AG04450 (cell line): ENCODE measurements at regions of chr4 and their contacts with region 1.

Region 1: DNA sequence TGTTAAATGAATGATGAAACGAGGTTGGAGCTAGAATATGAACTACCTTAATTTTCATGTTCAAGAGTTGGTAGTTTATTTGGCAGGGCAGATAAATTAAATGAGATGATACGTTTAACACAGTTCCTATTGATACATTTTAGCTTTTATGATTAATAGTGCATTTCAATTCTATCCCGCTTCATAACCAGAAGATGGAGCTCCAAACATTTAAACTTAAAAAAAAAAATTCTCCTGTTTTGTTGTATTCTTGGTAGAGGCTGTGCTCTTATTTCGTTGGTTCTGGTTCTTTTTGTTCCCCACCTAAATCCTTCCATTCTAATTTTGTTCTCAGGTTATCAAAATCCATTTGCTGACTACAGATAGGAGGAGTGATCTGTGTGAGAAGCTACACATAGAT is 71.8 kb upstream of the PTPN13 start:
- DNase-seq: no peak
- H3K4me3 ChIP-seq: no peak overlapping the region
- H3K27ac ChIP-seq: no peak overlapping the region
- H3K27me3 ChIP-seq: peaks cover 2% of the 10 kb centered on the region
- CTCF ChIP-seq: peak; percentile 33

Region 2: GRCh38 chr4:86117705-86118302 is 404.5 kb before region 1 on chr4:
- CTCF ChIA-PET with region 1: no interaction called
- POLR2A ChIA-PET with region 1: no interaction called
- DNase-seq: peak; percentile 30
- H3K4me3 ChIP-seq: no peak overlapping the region
- H3K27ac ChIP-seq: no peak overlapping the region
- H3K27me3 ChIP-seq: peaks cover 2% of the 10 kb centered on the region
- CTCF ChIP-seq: no peak

Region 3: GRCh38 chr4:86326400-86326799 is 195.9 kb before region 1 on chr4:
- CTCF ChIA-PET with region 1: no interaction called
- POLR2A ChIA-PET with region 1: no interaction called
- DNase-seq: no peak
- H3K4me3 ChIP-seq: no peak overlapping the region
- H3K27ac ChIP-seq: no peak overlapping the region
- H3K27me3 ChIP-seq: no peaks in the 10 kb centered on the region
- CTCF ChIP-seq: no peak

Region 4: DNA sequence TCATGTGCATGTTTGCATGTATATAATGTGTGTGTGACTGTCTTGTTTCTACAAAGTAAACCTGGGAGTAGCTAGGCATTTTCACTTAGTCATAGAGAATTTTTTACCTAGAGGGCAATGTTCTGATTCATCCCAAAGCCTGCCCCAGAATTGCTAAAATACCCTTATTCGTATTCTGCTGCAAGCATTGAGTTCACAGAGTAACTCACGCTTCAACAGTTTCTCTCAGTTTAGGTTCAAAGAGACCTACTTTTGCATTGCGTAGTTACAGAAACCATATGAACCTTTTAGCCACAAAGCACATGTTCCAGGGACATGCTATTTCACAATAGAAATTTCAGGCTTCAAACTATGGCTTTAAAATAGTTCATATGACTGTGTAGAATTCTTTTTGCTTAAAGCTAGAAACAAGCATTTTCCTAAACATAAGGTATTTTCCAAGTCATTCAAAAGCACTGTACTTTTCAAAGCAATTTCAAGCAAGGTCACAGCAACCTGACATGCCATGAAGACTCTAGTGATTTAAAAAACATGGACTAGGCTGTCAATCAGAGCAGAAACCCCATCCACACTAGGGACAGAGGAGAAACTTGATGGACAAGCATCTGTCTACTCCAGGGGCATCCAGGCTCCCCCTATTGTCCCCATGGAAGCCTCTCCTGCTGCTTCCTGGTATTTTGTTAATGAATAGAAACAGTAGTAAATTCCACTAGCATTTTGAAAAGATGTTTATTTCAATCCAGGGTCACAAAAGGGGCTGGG is 81.0 kb before region 1 on chr4:
- CTCF ChIA-PET with region 1: no interaction called
- POLR2A ChIA-PET with region 1: no interaction called
- DNase-seq: no peak
- H3K4me3 ChIP-seq: no peak overlapping the region
- H3K27ac ChIP-seq: no peak overlapping the region
- H3K27me3 ChIP-seq: no peaks in the 10 kb centered on the region
- CTCF ChIP-seq: no peak

Region 5: GRCh38 chr4:86908251-86908657 is 385.9 kb after region 1 on chr4:
- CTCF ChIA-PET with region 1: interaction called, 3 read pairs
- POLR2A ChIA-PET with region 1: interaction called, 14 read pairs
- DNase-seq: no peak
- H3K4me3 ChIP-seq: peak overlapping the region; percentile 11
- H3K27ac ChIP-seq: peak overlapping the region; percentile 42
- H3K27me3 ChIP-seq: no peaks in the 10 kb centered on the region
- CTCF ChIP-seq: no peak